MCF 10A (cell line): ENCODE measurements at regions of chr12 and their contacts with region 1.

Region 1: GRCh38 chr12:107093417-107094182 is at the start of gene CRY1:
- DNase-seq: peak; percentile 96
- H3K4me3 Mint-ChIP-seq: no peak within 1 kb of the TSS
- H3K27ac Mint-ChIP-seq: no peak within 1 kb of the TSS
- H3K4me1 Mint-ChIP-seq: no peaks in the 10 kb centered on the region
- H3K27me3 Mint-ChIP-seq: peaks cover 13% of the 10 kb centered on the region
- CTCF ChIP-seq: no peak
- total RNA-seq, gene CRY1: 11.6 and 14.9 TPM in 2 replicates

Region 2: DNA sequence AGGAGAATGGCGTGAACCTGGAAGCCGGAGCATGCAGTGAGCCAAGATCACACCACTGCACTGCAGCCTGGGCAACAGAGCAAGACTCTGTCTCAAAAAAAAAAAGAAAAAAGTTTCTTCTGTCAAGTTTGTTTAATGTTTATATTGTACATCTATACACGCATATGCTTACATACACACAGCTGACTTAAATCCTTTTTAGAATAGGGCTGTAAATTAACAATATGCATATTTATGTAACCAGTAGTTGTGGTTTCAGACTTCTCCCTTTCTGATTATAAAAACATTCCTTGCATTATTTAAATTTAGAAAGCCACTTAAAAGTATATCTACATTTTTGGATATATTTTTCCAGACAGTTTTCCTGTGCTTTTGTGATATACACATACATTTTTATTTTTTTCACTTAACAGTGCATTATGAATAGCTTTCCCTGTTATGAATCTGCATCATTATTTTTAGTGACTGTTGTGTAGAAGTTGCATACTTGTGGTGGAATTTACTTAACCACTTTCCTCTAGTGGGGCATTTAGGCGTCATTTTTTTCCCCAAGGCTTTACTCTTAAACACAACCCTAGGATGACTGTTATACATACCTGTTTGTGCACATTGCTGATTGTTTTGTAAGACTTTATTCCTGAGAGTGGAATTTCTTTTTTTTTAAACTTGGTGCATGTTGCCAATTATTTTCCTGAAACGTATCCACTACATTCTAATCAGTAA is 706.6 kb before region 1 on chr12:
- CTCF ChIA-PET with region 1: no interaction called
- POLR2A ChIA-PET with region 1: no interaction called
- intact Hi-C with region 1: loop called (anchors 10 kb)
- DNase-seq: no peak
- H3K4me3 Mint-ChIP-seq: no peak overlapping the region
- H3K27ac Mint-ChIP-seq: no peak overlapping the region
- H3K4me1 Mint-ChIP-seq: no peaks in the 10 kb centered on the region
- H3K27me3 Mint-ChIP-seq: no peaks in the 10 kb centered on the region
- CTCF ChIP-seq: no peak

Region 3: GRCh38 chr12:106955377-106956047 is 138.1 kb before region 1 on chr12 and contains the start of gene TMEM263:
- CTCF ChIA-PET with region 1: no interaction called
- POLR2A ChIA-PET with region 1: interaction called, 16 read pairs
- intact Hi-C with region 1: loop called (anchors 1 kb)
- DNase-seq: peak; percentile 86
- H3K4me3 Mint-ChIP-seq: peak within 1 kb of the TSS; percentile 95
- H3K27ac Mint-ChIP-seq: peak within 1 kb of the TSS; percentile 95
- H3K4me1 Mint-ChIP-seq: peaks cover 9% of the 10 kb centered on the region
- H3K27me3 Mint-ChIP-seq: no peaks in the 10 kb centered on the region
- CTCF ChIP-seq: no peak
- total RNA-seq, gene TMEM263: 60.1 and 68.4 TPM in 2 replicates

Region 4: GRCh38 chr12:107027636-107028053 is 66.0 kb before region 1 on chr12:
- CTCF ChIA-PET with region 1: interaction called, 4 read pairs
- POLR2A ChIA-PET with region 1: interaction called, 3 read pairs
- intact Hi-C with region 1: loop called (anchors 1 kb)
- DNase-seq: peak; percentile 62
- H3K4me3 Mint-ChIP-seq: no peak overlapping the region
- H3K27ac Mint-ChIP-seq: peak overlapping the region; percentile 61
- H3K4me1 Mint-ChIP-seq: peaks cover 7% of the 10 kb centered on the region
- H3K27me3 Mint-ChIP-seq: no peaks in the 10 kb centered on the region
- CTCF ChIP-seq: no peak

Region 5: DNA sequence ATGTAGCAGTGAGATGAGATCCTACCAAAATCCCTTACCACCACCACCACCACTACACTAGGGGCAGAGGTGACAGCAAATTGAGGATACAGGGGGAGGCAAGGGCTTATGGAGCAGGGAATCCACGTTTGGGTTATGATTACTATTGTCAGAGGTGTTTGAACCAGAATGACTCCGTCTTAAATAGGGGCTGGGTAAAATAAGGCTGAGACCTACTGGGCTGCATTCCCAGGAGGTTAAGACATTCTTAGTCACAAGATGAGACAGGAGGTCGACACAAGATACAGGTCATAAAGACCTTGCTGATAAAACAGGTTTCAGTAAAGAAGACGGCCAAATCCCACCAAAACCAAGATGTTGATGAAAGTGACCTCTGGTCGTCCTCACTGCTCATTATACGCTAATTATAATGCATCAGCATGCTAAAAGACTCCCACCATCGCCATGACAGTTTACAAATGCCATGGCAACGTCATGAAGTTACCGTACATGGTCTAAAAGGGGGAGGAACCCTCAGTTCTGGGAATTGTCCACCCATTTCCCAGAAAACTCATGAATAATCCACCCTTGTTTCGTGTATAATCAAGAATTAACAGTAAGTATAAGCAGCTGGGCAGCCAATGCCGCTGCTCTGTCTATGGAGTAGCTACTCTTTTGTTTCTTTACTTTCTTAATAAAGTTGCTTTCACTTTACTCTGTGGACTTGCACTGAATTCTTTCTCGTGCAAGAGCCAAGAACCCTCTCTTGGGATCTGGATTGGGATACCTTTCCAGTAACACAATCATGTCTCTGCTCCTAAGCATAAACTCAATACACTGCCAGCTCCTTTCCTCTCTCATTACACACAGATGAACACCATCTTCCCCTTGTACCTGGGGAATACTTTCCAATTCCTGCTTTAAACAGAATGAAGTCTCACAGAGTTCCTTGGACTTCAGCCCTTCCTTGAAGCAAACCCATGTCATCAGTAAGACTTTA is 16.4 kb after region 1 on chr12:
- CTCF ChIA-PET with region 1: interaction called, 20 read pairs
- POLR2A ChIA-PET with region 1: interaction called, 6 read pairs
- intact Hi-C with region 1: no loop called
- DNase-seq: no peak
- H3K4me3 Mint-ChIP-seq: no peak overlapping the region
- H3K27ac Mint-ChIP-seq: no peak overlapping the region
- H3K4me1 Mint-ChIP-seq: no peaks in the 10 kb centered on the region
- H3K27me3 Mint-ChIP-seq: peaks cover 39% of the 10 kb centered on the region
- CTCF ChIP-seq: no peak